ENCODE measurements at regions of chr7 and their contacts with region 1.

Region 1: GRCh38 chr7:38335492-38336147 is 62.2 kb upstream of the TARP start:
- DNase-seq: peak; percentile 80
- H3K4me3 ChIP-seq: peak overlapping the region; percentile 32
- CTCF ChIP-seq: peak; percentile 100

Region 2: DNA sequence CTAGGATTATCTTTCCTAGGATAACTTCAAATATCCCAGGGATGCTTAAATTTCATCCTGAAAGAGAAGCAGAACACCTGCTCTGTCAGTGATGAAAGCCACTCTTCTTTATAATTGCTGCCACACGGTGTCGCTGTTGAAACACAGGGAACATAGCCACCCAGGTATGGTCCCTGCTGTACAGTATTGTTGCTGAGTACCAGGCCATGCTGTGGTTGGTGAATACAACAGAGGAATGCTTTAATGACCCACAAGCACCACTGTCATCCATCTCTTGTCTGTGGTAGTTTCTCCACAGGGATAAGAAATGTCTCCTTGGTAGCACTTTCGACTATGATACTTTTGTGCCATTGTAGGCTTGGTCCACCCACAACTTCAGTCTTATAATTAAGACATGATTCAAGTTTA is 228.1 kb before region 1 on chr7:
- CTCF ChIA-PET with region 1: interaction called, 23 read pairs
- POLR2A ChIA-PET with region 1: no interaction called
- DNase-seq: no peak
- H3K4me3 ChIP-seq: no peak overlapping the region
- CTCF ChIP-seq: peak; percentile 67

Region 3: GRCh38 chr7:38195804-38196595 is 139.6 kb before region 1 on chr7:
- CTCF ChIA-PET with region 1: interaction called, 21 read pairs
- POLR2A ChIA-PET with region 1: no interaction called
- DNase-seq: no peak
- H3K4me3 ChIP-seq: no peak overlapping the region
- CTCF ChIP-seq: no peak

Region 4: DNA sequence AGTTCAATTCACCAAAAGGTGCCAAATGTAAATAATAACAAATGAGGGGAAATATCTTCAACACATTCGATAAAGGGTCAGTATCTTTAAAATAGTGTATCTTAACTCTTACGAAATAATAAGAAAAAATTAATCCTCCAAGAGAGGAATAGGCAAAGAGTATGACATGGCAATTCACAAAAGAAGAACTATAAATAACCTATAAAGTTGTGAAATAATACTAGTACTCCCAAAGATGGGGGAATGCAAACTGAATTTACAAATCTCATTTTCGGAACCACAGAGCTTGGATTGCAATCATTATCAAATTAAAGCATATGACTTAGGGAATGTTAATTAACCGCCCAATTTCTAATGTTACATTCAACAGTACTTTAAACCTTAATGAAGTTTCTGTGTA is 16.0 kb after region 1 on chr7:
- CTCF ChIA-PET with region 1: interaction called, 49 read pairs
- POLR2A ChIA-PET with region 1: no interaction called
- DNase-seq: no peak
- H3K4me3 ChIP-seq: no peak overlapping the region
- CTCF ChIP-seq: no peak

Region 5: GRCh38 chr7:38411404-38411803 is 75.8 kb after region 1 on chr7:
- CTCF ChIA-PET with region 1: no interaction called
- POLR2A ChIA-PET with region 1: no interaction called
- DNase-seq: no peak
- H3K4me3 ChIP-seq: no peak overlapping the region
- CTCF ChIP-seq: peak; percentile 19

Region 6: GRCh38 chr7:38535073-38535472 is 199.5 kb after region 1 on chr7:
- CTCF ChIA-PET with region 1: no interaction called
- POLR2A ChIA-PET with region 1: no interaction called
- DNase-seq: no peak
- H3K4me3 ChIP-seq: no peak overlapping the region
- CTCF ChIP-seq: no peak